CD4-positive, alpha-beta memory T cell (primary cell): ENCODE measurements at regions of chr19 and their contacts with region 1.

Region 1: GRCh38 chr19:51259348-51260245 is 8.7 kb downstream of the SIGLECL1 start:
- DNase-seq: peak in 4 of 5 donors; percentile 1 to 15 (median 5)
- H3K4me3 ChIP-seq: no peak overlapping the region
- H3K4me3 Mint-ChIP-seq: no peak overlapping the region
- H3K27ac ChIP-seq: no peak overlapping the region
- H3K27ac Mint-ChIP-seq: no peak overlapping the region
- H3K4me1 ChIP-seq: peaks cover 6% of the 10 kb centered on the region
- H3K4me1 Mint-ChIP-seq: peaks cover 2 to 18% (median 12%) of the 10 kb centered on the region in 4 donors
- H3K27me3 ChIP-seq: no peaks in the 10 kb centered on the region
- H3K27me3 Mint-ChIP-seq: peaks cover 8 to 12% of the 10 kb centered on the region in 2 donors

Region 2: DNA sequence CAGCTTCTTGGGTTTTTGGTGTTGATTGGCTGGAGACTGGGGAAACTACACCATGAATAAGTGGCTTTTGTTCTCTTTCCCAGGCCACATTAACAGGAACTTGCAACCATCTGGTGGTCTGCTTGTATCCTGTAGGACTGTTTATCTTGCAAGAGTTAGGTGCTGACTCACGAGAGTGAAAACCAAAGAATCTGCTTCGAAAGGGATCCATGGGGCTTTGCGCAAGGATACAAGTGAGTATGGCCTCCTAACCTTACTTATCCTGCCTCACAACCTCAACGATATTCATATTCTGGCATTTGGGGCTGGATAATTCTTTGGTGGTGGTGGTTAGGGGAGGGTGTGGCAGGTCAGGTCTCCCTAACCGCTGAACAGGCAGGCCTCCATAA is 13.4 kb before region 1 on chr19:
- CTCF ChIA-PET with region 1: interaction called, 11 read pairs
- POLR2A ChIA-PET with region 1: interaction called, 4 read pairs
- intact Hi-C with region 1: no loop called
- DNase-seq: no peak
- H3K4me3 ChIP-seq: no peak overlapping the region
- H3K4me3 Mint-ChIP-seq: no peak overlapping the region
- H3K27ac ChIP-seq: no peak overlapping the region
- H3K27ac Mint-ChIP-seq: no peak overlapping the region
- H3K4me1 ChIP-seq: no peaks in the 10 kb centered on the region
- H3K4me1 Mint-ChIP-seq: peaks cover 0 to 5% (median 1%) of the 10 kb centered on the region in 4 donors
- H3K27me3 ChIP-seq: no peaks in the 10 kb centered on the region
- H3K27me3 Mint-ChIP-seq: peaks cover 12 to 19% of the 10 kb centered on the region in 2 donors